ENCODE measurements at regions of chr2 and their contacts with region 1.

Region 1: DNA sequence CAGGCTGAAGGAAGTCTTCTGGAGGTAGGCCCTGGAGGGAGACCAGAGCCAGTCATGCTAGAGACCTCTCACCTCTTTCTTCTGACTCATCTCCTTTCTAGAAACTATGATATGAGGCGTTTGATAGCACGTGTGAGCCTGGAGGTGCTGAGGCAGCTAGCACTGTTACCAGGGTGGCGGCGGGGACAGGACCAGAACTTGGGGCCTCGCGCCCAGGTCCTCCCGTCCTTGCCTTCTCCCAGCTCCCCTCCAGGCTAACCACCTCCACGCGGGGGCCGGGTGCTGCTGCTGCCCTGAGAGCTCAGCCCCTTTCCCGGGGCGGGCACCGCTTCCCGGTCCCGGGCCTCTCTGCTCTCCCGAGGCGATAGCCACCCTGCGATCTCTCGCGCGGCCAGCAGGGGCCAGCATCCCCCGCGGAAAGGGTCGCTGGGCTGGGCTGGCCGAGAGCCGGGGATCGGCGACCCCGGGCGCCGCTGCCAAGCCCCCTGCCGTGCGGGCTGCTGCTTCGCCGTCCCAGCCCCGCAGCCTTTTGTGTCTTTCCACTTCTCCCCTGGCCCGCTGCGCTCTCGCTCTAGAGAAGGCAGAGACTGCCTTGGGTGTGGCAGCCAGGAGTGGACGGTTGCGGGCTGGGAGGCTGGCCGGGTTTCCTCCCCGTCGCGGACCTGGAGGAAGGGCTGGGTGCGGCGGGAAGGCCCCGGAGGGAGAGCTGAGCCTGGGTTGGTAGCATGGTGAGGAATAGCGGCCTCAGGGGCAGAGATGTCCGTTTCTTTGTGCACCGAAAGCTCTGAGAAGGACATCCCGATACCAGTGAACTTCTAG is 49.1 kb downstream of the TMEM17 start:
- DNase-seq: peak; percentile 48 to 87 (median 66)
- H3K4me3 ChIP-seq: peak overlapping the region; percentile 49 to 96 (median 75)
- H3K27ac ChIP-seq: peak overlapping the region in 44 of 59 donors; percentile 1 to 88 (median 58)
- H3K27me3 ChIP-seq: no peaks in the 10 kb centered on the region
- CTCF ChIP-seq: peak; percentile 53 to 100 (median 97)

Region 2: DNA sequence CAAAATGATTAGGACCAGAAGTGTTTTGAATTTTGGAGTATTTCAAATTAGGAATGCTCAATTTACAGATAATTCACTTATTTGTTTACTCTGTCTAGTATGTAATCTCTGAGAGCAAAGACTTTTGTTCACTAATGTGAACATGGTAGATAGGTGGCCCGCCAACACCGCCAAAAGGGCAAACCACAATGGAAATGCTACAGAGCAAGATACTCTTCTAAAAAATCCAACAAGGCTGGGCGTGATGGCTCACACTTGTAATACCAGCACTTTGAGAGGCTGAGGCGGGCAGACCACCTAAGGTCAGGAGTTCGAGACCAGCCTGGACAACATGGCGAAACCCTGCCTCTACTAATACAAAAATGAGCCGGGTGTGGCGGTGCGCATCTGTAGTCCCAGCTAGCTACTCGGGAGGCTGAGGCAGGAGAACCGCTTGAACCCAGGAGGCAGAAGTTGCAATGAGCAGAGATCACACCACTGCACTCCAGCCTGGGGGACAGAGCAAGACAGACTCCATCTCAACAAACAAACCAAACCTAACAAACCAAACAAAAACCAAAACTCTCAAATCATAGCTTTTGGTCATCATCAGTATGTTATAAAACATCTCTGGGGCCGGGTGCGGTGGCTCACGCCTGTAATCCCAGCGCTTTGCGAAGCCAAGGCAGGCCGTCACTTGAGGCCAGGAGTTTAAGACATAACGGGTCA is 570.9 kb before region 1 on chr2:
- intact Hi-C with region 1: no loop called
- DNase-seq: no peak
- H3K4me3 ChIP-seq: peak overlapping the region in 18 of 59 donors; percentile 8 to 98 (median 90)
- H3K27ac ChIP-seq: no peak overlapping the region
- H3K27me3 ChIP-seq: no peaks in the 10 kb centered on the region
- CTCF ChIP-seq: no peak

Region 3: GRCh38 chr2:62505750-62506420 is 49.0 kb after region 1 on chr2 and contains the start of gene TMEM17:
- intact Hi-C with region 1: loop called in 1 of 2 experiments (anchors 5 kb)
- DNase-seq: peak; percentile 74 to 94 (median 87)
- H3K4me3 ChIP-seq: peak within 1 kb of the TSS; percentile 55 to 87 (median 73)
- H3K27ac ChIP-seq: peak within 1 kb of the TSS; percentile 79 to 98 (median 95)
- H3K27me3 ChIP-seq: no peaks in the 10 kb centered on the region
- CTCF ChIP-seq: peak in 22 of 56 donors; percentile 7 to 42 (median 18)
- total RNA-seq, gene TMEM17: 1.8 to 9.6 (median 5.2) TPM

Region 4: GRCh38 chr2:62705007-62705829 is 248.3 kb after region 1 on chr2 and contains the start of gene EHBP1:
- intact Hi-C with region 1: loop called (anchors 1 to 5 kb)
- DNase-seq: peak; percentile 97 to 100 (median 99)
- H3K4me3 ChIP-seq: peak within 1 kb of the TSS; percentile 57 to 95 (median 82)
- H3K27ac ChIP-seq: peak within 1 kb of the TSS; percentile 39 to 95 (median 88)
- H3K27me3 ChIP-seq: no peaks in the 10 kb centered on the region
- CTCF ChIP-seq: peak in 3 of 56 donors; percentile 9 to 29 (median 9)
- total RNA-seq, gene EHBP1: 66.5 to 148 (median 107) TPM

Region 5: GRCh38 chr2:62724886-62725711 is 268.2 kb after region 1 on chr2:
- intact Hi-C with region 1: loop called in 1 of 2 experiments (anchors 1 kb)
- DNase-seq: peak; percentile 23 to 86 (median 76)
- H3K4me3 ChIP-seq: peak overlapping the region in 14 of 59 donors; percentile 3 to 32 (median 19)
- H3K27ac ChIP-seq: no peak overlapping the region
- H3K27me3 ChIP-seq: no peaks in the 10 kb centered on the region
- CTCF ChIP-seq: peak in 53 of 56 donors; percentile 29 to 80 (median 62)

Region 6: GRCh38 chr2:62774555-62775366 is 317.8 kb after region 1 on chr2:
- intact Hi-C with region 1: loop called (anchors 2 kb)
- DNase-seq: no peak
- H3K4me3 ChIP-seq: no peak overlapping the region
- H3K27ac ChIP-seq: peak overlapping the region in 34 of 59 donors; percentile 0 to 76 (median 36)
- H3K27me3 ChIP-seq: no peaks in the 10 kb centered on the region
- CTCF ChIP-seq: peak; percentile 59 to 95 (median 85)

Measured in dorsolateral prefrontal cortex (tissue), 120 donors.